HEK293 (cell line): ENCODE measurements at regions of chr17 and their contacts with region 1.

Region 1: DNA sequence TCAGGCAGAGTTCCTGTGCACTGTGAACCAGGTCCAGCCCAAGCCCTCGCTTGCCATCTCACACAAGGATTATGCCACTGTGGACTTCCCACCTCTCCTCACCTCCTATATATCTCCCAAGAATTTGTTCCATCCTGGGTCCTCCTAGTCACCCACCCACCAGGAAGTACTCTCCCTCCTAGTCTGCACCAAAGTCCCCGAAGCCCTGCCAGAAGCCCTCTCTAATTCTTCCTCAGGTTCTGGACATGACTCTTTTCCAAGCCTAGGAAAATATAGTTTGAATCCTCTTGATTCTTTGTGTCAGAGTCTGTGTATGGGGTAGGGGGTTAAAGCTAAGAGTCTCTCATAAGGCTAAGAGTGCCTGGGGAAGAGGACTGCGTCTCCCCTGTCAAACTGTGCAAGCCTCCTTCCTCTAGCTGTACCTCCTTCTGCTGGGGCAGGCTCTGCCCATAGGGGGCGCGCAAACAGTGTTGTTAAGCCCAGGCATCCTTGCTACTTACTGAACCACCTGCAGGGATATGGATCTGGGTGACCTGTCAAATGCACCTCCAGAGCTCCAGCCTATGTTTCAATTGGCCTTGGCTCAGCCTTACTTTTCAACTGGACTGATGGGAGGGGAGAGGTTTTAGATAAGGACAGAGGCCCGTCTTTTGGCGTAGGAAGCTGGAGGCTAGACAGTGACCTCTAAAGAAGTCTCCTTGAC is 16.6 kb upstream of the DLX4 start:
- H3K4me3 ChIP-seq: no peak overlapping the region
- H3K27ac ChIP-seq: no peak overlapping the region
- H3K4me1 ChIP-seq: no peaks in the 10 kb centered on the region
- CTCF ChIP-seq: peak; percentile 84

Region 2: DNA sequence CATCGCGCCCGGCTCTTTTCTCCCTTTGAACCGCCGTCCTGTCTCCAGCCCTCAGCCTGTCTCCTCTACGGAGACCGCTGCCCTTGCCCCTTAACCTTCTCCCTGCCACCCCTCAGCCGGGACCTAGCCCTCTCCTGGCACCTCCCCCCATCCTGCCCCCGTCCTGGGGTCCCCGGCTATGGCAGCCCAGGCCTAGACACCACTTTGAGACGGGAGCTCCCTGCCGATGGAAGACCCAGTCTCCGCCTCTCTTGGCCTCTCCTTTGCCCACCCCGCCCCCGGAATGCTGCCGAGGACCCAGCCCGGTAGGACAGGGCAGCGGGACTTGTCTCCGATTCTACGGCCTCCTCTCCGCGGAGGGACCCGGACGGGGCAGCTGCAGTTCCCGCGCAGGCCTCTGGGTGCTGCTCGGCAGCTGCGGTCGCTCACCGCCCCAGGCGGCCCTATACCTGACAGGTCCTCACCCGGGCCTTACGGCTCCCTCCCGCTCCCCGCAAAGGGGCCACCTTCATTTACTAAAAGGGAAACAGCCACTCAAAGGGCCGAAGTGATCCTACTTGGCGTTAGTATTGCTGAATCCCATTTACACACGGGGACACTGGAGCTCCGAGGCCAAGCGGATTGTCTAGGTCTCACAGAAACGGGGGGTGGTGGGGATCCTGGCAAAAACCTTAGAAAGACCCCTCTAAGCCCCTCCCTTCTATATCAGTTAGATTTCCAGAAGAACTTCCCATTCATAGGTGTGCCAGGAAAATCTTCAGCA is 71.9 kb before region 1 on chr17:
- CTCF ChIA-PET with region 1: interaction called, 23 read pairs
- POLR2A ChIA-PET with region 1: no interaction called
- H3K4me3 ChIP-seq: peak overlapping the region; percentile 21
- H3K27ac ChIP-seq: no peak overlapping the region
- H3K4me1 ChIP-seq: peaks cover 5% of the 10 kb centered on the region; the same call in 1 of the 2 replicates
- CTCF ChIP-seq: peak; percentile 76

Region 3: GRCh38 chr17:49899191-49899485 is 53.2 kb before region 1 on chr17:
- CTCF ChIA-PET with region 1: interaction called, 25 read pairs
- POLR2A ChIA-PET with region 1: no interaction called
- H3K4me3 ChIP-seq: no peak overlapping the region
- H3K27ac ChIP-seq: no peak overlapping the region
- H3K4me1 ChIP-seq: peaks cover 6% of the 10 kb centered on the region; the same call in 1 of the 2 replicates
- CTCF ChIP-seq: 0 out of 2 replicates have a peak, but pooled peaks have one; percentile 33

Region 4: DNA sequence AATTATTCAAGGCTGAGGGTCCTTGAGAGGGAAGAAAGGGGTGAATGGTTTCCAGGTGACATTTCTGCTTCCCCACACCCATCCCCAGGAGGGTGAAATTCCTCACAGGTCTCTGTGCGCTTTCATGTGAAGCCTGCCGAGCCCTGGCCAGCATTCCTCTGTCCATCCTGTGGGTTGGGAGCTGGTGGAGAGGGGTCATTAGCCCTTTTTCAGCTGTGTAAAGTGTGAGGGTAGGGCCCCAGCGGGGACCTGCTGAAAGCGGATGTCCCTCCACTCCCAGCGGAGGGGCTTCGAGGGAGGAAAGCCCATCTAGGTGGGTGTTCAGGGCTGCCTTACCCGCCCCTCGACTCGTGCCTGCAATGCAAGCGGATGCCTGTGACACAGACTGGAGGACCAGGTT is 36.7 kb before region 1 on chr17:
- CTCF ChIA-PET with region 1: interaction called, 20 read pairs
- POLR2A ChIA-PET with region 1: no interaction called
- H3K4me3 ChIP-seq: no peak overlapping the region
- H3K27ac ChIP-seq: no peak overlapping the region
- H3K4me1 ChIP-seq: no peaks in the 10 kb centered on the region
- CTCF ChIP-seq: no peak

Region 5: DNA sequence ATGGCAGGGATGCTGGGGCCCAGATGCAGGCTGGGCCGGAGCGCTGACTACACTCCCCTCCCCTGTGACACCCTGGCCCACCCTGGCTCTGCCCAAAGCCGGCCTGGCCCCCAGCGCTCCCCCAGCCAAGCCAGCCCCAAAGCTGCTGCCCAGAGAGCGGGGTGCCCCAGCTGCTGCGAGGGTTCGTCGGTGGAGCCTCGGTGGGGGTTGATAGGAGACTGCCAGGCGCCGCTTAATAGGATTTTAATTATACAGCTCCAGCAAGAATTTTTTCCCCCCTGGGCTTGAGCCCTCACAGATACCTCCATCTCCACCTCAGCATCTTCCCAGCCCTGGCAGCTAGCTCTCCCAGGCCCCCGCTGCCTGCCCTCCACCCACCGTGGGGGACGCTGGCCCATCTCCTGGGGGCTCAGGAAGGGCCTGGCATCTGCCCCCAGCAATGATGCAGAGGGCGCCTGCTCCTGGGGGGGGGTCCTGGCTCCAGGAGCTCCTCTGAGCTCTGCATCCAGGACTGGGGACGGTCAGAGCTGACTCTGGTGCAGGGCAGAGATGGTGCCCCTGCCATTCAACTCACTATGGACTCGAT is 20.1 kb before region 1 on chr17:
- CTCF ChIA-PET with region 1: interaction called, 18 read pairs
- POLR2A ChIA-PET with region 1: no interaction called
- H3K4me3 ChIP-seq: no peak overlapping the region
- H3K27ac ChIP-seq: no peak overlapping the region
- H3K4me1 ChIP-seq: no peaks in the 10 kb centered on the region
- CTCF ChIP-seq: no peak

Region 6: GRCh38 chr17:49980703-49981197 is 28.4 kb after region 1 on chr17:
- CTCF ChIA-PET with region 1: interaction called, 67 read pairs
- POLR2A ChIA-PET with region 1: interaction called, 8 read pairs
- H3K4me3 ChIP-seq: no peak overlapping the region
- H3K27ac ChIP-seq: no peak overlapping the region
- H3K4me1 ChIP-seq: peaks cover 26% of the 10 kb centered on the region
- CTCF ChIP-seq: no peak

Region 7: GRCh38 chr17:50087246-50087911 is 135.0 kb after region 1 on chr17:
- CTCF ChIA-PET with region 1: interaction called, 12 read pairs
- POLR2A ChIA-PET with region 1: no interaction called
- H3K4me3 ChIP-seq: no peak overlapping the region
- H3K27ac ChIP-seq: no peak overlapping the region
- H3K4me1 ChIP-seq: no peaks in the 10 kb centered on the region
- CTCF ChIP-seq: peak; percentile 91